ENCODE measurements at regions of chr16 and their contacts with region 1.

Region 1: DNA sequence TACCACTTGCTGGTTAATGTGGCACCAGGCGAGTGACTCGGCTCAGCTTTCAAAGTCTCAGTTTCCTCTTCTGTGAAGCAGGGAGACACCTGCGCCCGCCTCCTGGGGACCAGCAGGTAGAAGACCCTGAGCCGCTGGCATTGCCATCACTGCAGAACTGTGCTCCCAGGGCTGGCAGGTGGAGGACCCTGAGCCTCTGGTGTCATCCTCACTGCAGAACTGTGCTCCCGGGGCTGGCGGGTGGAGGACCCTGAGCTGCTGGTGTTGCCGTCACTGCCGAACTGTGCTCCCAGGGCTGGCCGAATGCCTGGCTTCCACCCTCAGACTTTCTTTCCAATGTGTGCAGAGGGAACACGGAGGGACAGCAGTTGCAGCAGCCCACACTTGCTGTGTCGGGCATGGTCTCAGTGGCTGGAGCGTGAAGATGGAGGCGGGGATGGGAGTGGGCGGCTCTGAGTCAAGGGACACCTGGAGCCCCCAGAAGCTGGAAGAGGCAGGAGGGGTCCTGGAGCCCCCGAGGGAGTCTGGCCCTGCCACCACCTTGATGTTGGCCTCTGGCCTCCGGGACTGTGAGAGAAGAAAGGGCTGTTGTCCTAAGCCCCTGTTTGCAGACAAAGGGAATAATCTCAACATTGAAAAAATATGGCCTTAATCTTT is 75.8 kb upstream of the METTL9 start:
- DNase-seq: no peak
- ATAC-seq: no peak
- H3K4me3 Mint-ChIP-seq: no peak overlapping the region
- H3K27ac Mint-ChIP-seq: peak overlapping the region; percentile 30
- H3K4me1 Mint-ChIP-seq: peaks cover 1% of the 10 kb centered on the region
- H3K27me3 Mint-ChIP-seq: peaks cover 12% of the 10 kb centered on the region

Region 2: DNA sequence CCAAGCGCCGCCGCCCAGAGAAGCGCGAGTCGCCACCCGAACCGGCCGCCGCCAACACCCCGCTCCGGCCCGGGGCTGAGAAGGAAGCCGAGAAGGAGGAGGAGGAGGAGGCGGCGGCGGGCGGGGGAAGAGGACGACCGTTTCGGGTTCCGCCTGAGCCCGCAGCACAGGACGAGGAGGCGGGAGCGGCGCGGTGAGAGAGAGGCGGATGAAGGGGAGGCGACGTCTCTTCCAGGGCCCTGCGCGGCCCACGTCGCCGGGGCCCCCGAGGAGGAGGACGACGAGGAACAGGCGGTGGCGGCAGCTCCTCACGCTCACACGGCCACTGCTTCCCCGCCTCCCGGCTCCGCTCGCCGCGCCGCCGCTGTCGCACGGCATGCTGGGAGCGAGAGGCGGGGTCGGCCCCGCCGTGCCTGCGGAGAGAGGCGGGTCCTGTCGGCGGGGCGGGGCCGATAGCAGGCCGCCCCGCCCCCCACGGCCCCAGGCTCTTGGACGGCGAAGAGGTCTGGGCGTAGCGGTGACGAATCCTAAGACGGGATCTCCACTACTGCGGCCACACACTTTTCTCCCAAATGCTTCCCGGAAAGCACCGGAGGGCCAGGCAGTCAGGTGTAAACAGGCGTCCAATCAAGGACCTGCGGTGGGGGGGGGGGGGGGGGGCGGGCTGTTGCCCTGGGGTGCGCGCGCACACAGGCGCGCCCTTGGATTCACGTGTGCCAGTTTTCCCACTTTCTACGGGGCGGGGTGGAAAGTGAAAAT is 21.5 kb before region 1 on chr16:
- POLR2A ChIA-PET with region 1: interaction called, 16 read pairs
- DNase-seq: peak; percentile 99
- ATAC-seq: peak; percentile 62
- H3K4me3 Mint-ChIP-seq: peak overlapping the region; percentile 91
- H3K27ac Mint-ChIP-seq: peak overlapping the region; percentile 94
- H3K4me1 Mint-ChIP-seq: peaks cover 15% of the 10 kb centered on the region
- H3K27me3 Mint-ChIP-seq: no peaks in the 10 kb centered on the region

Measured in activated naive CD8-positive, alpha-beta T cell treated with anti-CD3 and anti-CD28 coated beads, Interleukin-2, amount 10 ng/mL, durations not matched to agents 7 days and 5 days (primary cell).